ENCODE measurements at regions of chr17 and their contacts with region 1.

Region 1: DNA sequence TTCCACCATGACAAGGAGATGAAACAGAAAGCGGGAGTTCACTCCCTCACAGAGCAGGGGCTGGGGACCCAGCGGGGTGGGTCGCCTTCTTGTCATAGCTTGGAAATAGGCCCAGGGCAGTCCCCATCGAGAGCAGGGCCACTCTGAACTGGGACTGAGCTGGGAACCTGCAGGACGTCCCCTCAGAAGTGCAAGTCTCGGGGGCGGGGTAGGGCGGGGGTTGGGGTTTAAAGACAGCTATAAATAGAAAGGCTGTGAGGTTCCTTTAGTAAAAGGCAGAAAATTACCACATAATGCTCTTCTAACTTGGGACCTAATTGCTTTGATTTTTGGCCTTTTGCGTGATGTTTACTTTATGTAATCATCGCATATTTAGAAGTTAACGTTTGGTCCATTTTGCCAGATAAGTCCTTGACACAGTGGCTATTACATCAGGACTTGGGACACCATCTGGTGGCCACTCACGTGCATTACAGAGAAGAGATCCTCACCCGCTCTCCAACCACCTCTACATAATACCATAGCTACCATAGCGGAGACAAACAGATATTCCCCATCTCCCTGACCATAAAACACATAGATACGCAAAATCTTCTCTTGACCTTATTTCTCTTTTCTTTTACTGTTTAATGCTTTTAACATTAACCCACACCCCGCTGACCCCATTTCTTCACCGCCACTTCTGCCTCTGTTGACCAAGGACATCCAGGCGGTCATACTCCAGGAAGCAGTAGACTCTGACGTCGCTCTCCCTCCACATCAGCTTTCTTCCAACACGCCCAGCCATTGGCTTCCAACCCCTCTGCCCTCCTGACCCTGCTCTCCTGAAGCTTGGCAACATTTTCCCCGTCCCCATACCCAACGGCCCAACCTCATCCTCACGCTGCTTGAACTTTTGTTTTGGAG is 27.5 kb upstream of the PIK3R6 start:
- DNase-seq: peak; percentile 79
- CTCF ChIP-seq: peak; percentile 72

Region 2: DNA sequence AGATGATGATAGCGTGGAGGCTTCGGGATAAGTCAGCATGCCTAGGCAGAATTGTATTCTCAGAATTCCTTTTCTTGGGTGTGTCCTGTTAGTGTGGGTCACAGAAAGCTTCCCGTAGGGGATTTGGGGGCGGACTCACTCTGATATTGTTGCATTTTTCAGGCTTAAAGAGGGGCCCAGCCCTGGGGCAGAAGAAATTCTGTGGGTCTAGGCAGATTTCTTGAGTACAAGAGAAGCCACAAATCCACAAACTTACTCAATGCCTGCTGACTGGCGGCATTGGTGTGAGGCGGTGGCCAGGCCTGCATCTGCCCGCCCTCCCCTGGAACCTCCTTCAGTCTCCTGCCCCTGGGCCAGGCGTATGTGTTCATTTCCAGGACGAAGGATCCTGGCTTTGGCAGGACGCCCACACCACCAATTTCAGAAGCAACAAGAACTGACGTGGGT is 167.8 kb before region 1 on chr17:
- CTCF ChIA-PET with region 1: no interaction called
- POLR2A ChIA-PET with region 1: no interaction called
- DNase-seq: no peak
- CTCF ChIP-seq: no peak

Region 3: GRCh38 chr17:8745586-8746500 is 149.1 kb before region 1 on chr17:
- CTCF ChIA-PET with region 1: interaction called, 10 read pairs
- POLR2A ChIA-PET with region 1: no interaction called
- DNase-seq: peak; percentile 92
- CTCF ChIP-seq: peak; percentile 79

Region 4: DNA sequence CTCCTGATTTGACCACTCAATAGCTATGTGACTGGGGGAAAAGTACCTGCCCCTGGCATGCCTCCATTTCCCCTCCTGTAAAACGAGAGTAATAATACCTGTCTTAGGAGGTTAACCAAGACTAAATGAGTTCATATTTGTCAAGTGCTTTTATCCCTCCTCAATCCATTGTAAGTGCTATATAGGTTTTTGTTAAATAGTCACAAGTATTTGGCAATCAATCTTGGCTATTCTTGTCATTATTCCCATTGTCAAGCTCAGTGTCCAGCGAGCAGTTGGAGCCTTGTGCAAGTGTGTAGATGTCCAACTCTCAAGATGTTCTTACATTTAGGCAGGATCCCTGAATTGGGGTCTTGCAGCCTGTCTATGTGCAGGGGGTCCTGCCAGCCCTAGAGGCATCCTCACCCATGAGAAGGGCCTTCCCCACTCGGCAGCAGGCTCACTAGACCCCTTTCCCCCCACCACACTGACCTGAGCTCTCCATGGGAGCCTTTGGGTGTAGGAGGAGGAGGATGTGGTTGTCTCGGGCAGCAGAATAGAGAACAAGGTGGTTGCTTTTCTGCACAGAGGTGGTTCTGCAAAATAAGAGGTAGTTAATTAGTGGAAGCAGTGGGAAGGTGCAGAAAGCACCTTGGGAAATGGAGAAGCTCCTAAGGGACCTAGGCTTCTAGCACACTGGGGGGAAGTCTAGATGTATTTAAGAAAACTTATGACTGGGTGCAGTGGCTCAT is 45.5 kb before region 1 on chr17:
- CTCF ChIA-PET with region 1: interaction called, 18 read pairs
- POLR2A ChIA-PET with region 1: no interaction called
- DNase-seq: no peak
- CTCF ChIP-seq: no peak

Region 5: GRCh38 chr17:8867361-8867981 is 27.5 kb before region 1 on chr17 and contains the start of gene PIK3R6:
- CTCF ChIA-PET with region 1: interaction called, 29 read pairs
- POLR2A ChIA-PET with region 1: interaction called, 5 read pairs
- DNase-seq: peak; percentile 57
- CTCF ChIP-seq: no peak

Region 6: GRCh38 chr17:8916466-8916865 is 21.5 kb after region 1 on chr17:
- CTCF ChIA-PET with region 1: interaction called, 67 read pairs
- POLR2A ChIA-PET with region 1: interaction called, 3 read pairs
- DNase-seq: no peak
- CTCF ChIP-seq: no peak

Measured in GM10248 (cell line).